Mammary epithelial cell (primary cell): ENCODE measurements at regions of chrX and their contacts with region 1.

Region 1: DNA sequence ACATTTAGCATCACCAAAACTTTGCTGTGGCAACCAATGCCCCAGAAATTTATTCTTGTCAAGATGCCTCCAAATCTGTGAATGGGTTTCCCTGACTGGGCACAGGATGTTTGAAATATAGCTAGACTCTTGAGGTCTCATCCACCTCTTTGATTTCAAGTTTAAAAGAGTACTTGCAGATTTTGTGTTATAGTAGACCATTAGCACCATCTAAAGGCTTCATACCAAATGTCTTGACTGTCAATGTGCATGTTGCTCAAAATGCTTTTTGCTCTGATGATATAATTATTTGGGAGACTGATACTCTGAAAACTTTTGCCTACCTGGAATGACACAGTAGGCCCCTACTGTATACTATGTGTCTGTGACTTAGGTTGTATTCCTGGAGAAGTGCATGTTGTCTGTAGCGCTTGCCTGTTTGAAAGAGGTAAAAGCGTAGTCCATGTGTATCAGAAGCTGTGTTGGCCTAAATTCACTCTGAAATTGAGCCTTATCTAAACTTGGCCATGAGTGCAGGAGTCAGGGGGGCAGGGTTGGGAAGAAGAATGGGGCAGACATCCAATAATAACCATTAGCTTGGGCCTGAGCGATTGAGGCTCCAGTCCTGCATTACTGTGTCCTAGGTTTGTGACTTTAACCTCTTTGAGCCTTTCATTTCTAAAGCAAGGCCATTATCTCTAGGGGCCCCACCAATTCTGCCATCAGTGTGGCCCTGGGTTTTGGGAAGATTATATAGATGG is 33.8 kb downstream of the NDP start:
- DNase-seq: no peak
- H3K4me3 ChIP-seq: no peak overlapping the region
- H3K27ac ChIP-seq: no peak overlapping the region
- H3K4me1 ChIP-seq: no peaks in the 10 kb centered on the region
- H3K27me3 ChIP-seq: peaks cover 3% of the 10 kb centered on the region
- CTCF ChIP-seq: peak in 1 of 2 donors; percentile 20

Region 2: DNA sequence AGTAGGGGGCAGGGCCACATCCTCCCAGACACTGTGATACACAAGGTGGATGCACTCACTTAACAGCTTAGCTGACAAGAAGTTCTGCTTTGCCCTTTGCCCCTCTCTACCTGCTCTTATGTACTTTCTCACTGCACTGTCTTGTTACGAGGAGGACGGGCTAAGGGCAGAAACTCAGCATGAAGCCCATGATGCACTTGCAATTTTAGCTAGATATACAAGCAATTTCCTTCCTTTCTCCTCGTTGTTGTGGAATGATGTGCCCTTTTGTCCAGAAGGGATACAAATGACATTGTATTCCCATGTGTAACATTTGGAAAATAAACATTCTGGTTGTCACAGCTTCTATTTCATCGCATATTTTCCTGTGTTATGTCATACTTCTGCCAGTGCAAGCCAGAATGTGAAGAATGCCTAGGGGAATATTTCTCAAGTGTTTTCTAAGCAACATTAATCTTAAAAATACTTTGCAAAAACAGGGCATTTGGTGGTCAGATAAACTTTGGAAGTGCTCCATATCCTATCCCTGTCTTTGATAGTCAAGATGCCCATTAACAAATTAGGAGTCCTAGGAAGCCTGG is 236.1 kb before region 1 on chrX:
- CTCF ChIA-PET with region 1: no interaction called
- dilution Hi-C with region 1: no loop called
- in situ Hi-C with region 1: no loop called
- intact Hi-C with region 1: no loop called
- DNase-seq: no peak
- H3K4me3 ChIP-seq: no peak overlapping the region
- H3K27ac ChIP-seq: peak overlapping the region; percentile 44
- H3K4me1 ChIP-seq: peaks cover 17% of the 10 kb centered on the region
- H3K27me3 ChIP-seq: peaks cover 6% of the 10 kb centered on the region
- CTCF ChIP-seq: no peak

Region 3: GRCh38 chrX:43836435-43837184 is 102.7 kb before region 1 on chrX:
- CTCF ChIA-PET with region 1: no interaction called
- dilution Hi-C with region 1: no loop called
- in situ Hi-C with region 1: no loop called
- intact Hi-C with region 1: loop called (anchors 1 kb)
- DNase-seq: peak; percentile 14
- H3K4me3 ChIP-seq: no peak overlapping the region
- H3K27ac ChIP-seq: no peak overlapping the region
- H3K4me1 ChIP-seq: no peaks in the 10 kb centered on the region
- H3K27me3 ChIP-seq: peaks cover 1% of the 10 kb centered on the region
- CTCF ChIP-seq: peak; percentile 58 to 62